ENCODE measurements at regions of chr1 and their contacts with region 1.

Region 1: DNA sequence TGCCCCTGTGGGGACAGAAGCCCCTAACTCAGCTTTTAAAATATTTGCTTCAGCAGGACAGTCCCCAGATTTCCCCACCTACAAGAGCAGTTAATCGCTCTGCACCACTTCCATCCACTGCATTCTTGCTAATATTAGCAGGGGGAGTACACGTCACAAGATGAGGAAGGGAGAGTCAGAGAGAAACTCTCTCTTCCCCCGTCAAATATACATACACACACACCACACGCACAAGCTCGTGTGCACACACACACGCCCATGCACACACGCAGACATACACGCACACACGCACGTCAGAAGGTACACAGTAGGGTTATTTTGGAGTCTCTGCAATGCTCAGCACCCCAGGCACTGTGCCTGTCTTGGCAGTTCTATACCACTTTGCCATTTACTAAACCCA is 2.1 kb downstream of the CLCA1 start:
- DNase-seq: no peak
- ATAC-seq: no peak
- H3K4me3 ChIP-seq: no peak overlapping the region
- H3K4me3 Mint-ChIP-seq: no peak overlapping the region
- H3K27ac ChIP-seq: no peak overlapping the region
- H3K27ac Mint-ChIP-seq: no peak overlapping the region
- H3K4me1 ChIP-seq: no peaks in the 10 kb centered on the region
- H3K4me1 Mint-ChIP-seq: peaks cover 0 to 4% (median 0%) of the 10 kb centered on the region in 3 donors
- H3K27me3 ChIP-seq: peaks cover 0 to 4% of the 10 kb centered on the region in 2 experiments
- H3K27me3 Mint-ChIP-seq: peaks cover 8 to 12% of the 10 kb centered on the region in 2 donors

Region 2: DNA sequence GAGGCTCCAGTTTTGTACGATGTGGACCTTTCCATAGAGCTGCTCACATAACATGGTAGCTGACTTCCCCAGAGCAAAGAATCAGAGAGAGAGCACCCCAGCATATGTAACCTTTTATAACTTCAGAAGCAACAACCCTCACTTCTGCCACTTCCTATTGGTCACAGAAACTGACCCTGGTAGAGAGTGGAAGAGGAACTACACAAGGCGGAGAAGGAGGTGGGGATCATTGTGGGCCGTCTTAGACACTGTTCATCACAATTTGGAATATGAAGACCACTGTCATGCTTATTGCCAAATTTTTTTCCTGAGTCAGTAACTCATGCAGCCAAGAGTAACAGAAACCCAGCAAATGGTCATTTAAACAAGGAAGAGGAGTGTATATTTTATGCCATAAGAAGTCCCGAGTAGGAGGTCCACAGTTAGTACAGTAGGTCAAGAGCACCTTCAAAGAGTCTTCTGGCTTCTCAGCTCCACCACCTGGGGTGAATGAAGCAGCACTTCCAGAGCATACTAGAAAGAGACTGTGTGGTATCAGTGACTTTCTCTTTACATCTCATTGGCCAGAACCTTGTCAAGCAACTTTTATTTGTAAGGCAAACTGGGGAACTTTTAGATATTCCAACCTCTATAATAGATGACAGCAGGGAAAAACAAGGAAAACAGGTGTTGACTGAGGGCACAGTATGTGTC is 146.6 kb before region 1 on chr1:
- CTCF ChIA-PET with region 1: no interaction called
- POLR2A ChIA-PET with region 1: no interaction called
- DNase-seq: no peak
- ATAC-seq: no peak
- H3K4me3 ChIP-seq: no peak overlapping the region
- H3K4me3 Mint-ChIP-seq: no peak overlapping the region
- H3K27ac ChIP-seq: no peak overlapping the region
- H3K27ac Mint-ChIP-seq: no peak overlapping the region
- H3K4me1 ChIP-seq: no peaks in the 10 kb centered on the region
- H3K4me1 Mint-ChIP-seq: no peaks in the 10 kb centered on the region
- H3K27me3 ChIP-seq: no peaks in the 10 kb centered on the region
- H3K27me3 Mint-ChIP-seq: peaks cover 4 to 5% of the 10 kb centered on the region in 2 donors

Region 3: DNA sequence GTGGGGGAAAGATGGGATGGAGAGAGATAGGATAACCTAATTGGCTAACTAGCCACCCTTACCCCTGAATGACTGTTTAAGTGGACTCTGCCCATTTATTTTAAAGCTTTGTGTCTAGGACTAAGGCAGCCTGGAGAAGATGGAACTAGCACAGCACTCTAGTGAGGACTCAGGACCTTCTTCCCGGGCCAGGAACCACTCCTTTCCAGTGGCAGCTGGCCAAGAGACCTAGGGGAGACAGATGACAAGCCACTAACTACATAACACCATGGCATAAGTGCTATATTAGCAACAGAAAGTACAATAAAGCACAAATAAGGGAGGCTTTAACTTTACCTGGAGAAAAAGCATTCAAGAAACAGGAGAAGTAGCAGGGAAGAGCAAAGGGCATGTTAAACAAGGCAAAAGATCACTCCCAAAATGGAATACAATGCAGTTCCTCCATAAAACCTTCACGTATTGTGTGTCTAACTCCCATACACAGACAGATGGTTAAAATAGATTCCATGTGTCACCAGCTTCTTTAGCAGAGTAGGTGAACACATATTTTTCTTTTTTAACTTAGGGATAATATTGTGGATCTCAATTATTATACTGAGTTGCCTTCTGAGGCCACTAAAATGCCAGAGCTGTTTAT is 18.5 kb after region 1 on chr1:
- CTCF ChIA-PET with region 1: interaction called in 1 of 2 experiments, 16 read pairs
- POLR2A ChIA-PET with region 1: no interaction called
- DNase-seq: no peak
- ATAC-seq: no peak
- H3K4me3 ChIP-seq: no peak overlapping the region
- H3K4me3 Mint-ChIP-seq: no peak overlapping the region
- H3K27ac ChIP-seq: no peak overlapping the region
- H3K27ac Mint-ChIP-seq: no peak overlapping the region
- H3K4me1 ChIP-seq: no peaks in the 10 kb centered on the region
- H3K4me1 Mint-ChIP-seq: no peaks in the 10 kb centered on the region
- H3K27me3 ChIP-seq: peaks cover 0 to 4% of the 10 kb centered on the region in 2 experiments
- H3K27me3 Mint-ChIP-seq: peaks cover 0 to 3% of the 10 kb centered on the region in 2 donors

Region 4: GRCh38 chr1:86507935-86508582 is 37.2 kb after region 1 on chr1:
- CTCF ChIA-PET with region 1: interaction called, 7 to 12 read pairs
- POLR2A ChIA-PET with region 1: no interaction called
- DNase-seq: peak in 8 of 35 experiments; percentile 3 to 37 (median 8)
- ATAC-seq: peak in 2 of 4 experiments; percentile 56 to 61
- H3K4me3 ChIP-seq: no peak overlapping the region
- H3K4me3 Mint-ChIP-seq: no peak overlapping the region
- H3K27ac ChIP-seq: no peak overlapping the region
- H3K27ac Mint-ChIP-seq: no peak overlapping the region
- H3K4me1 ChIP-seq: peaks cover 0 to 6% of the 10 kb centered on the region in 2 experiments
- H3K4me1 Mint-ChIP-seq: peaks cover 0 to 6% (median 1%) of the 10 kb centered on the region in 3 donors
- H3K27me3 ChIP-seq: peaks cover 0 to 7% of the 10 kb centered on the region in 2 experiments
- H3K27me3 Mint-ChIP-seq: peaks cover 3 to 8% of the 10 kb centered on the region in 2 donors

Region 5: DNA sequence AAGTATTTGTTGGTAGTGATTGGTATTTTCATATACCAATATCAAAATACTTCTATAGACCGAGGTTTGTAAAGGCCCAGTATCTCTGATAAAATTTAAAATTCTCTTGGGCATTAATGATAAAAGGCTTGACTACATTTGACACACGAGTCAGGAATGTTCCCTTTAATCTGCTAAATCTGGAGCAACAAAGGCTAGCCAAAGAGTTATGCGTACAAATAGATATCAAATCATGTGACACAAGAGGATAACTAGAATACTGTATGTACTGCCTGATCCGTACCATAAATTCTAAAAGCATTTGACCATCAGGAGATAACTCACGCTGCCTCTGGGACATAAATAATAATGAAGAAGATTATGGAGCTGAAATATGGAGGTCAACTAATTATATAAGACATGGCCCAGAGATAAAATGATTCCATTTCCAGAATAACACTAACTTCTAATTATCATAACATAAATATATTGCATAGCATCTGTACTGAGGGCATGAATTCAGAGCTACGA is 169.4 kb after region 1 on chr1:
- CTCF ChIA-PET with region 1: no interaction called
- POLR2A ChIA-PET with region 1: no interaction called
- DNase-seq: no peak
- ATAC-seq: no peak
- H3K4me3 ChIP-seq: no peak overlapping the region
- H3K4me3 Mint-ChIP-seq: no peak overlapping the region
- H3K27ac ChIP-seq: no peak overlapping the region
- H3K27ac Mint-ChIP-seq: no peak overlapping the region
- H3K4me1 ChIP-seq: no peaks in the 10 kb centered on the region
- H3K4me1 Mint-ChIP-seq: no peaks in the 10 kb centered on the region
- H3K27me3 ChIP-seq: peaks cover 0 to 3% of the 10 kb centered on the region in 2 experiments
- H3K27me3 Mint-ChIP-seq: peaks cover 3 to 6% of the 10 kb centered on the region in 2 donors